ENCODE measurements at regions of chr5 and their contacts with region 1.

Region 1: GRCh38 chr5:76867827-76868693 is 18.2 kb downstream of the S100Z start:
- DNase-seq: peak; percentile 79 to 94
- H3K4me3 ChIP-seq: no peak overlapping the region
- H3K27ac ChIP-seq: peak overlapping the region; percentile 62
- H3K4me1 ChIP-seq: peaks cover 17% of the 10 kb centered on the region
- H3K27me3 ChIP-seq: no peaks in the 10 kb centered on the region
- CTCF ChIP-seq: peak; percentile 94

Region 2: GRCh38 chr5:76715736-76716455 is 152.2 kb before region 1 on chr5 and contains the start of gene F2R:
- CTCF ChIA-PET with region 1: no interaction called
- POLR2A ChIA-PET with region 1: no interaction called
- intact Hi-C with region 1: loop called (anchors 10 kb)
- DNase-seq: peak in 1 of 2 experiments; percentile 30
- H3K4me3 ChIP-seq: peak within 1 kb of the TSS; percentile 87
- H3K27ac ChIP-seq: no peak within 1 kb of the TSS
- H3K4me1 ChIP-seq: no peaks in the 10 kb centered on the region; the same call in 1 of the 2 replicates
- H3K27me3 ChIP-seq: no peaks in the 10 kb centered on the region
- CTCF ChIP-seq: peak; percentile 59; the same call in 1 of the 2 replicates
- total RNA-seq, gene F2R: 3.6 and 3.9 TPM in 2 replicates

Region 3: DNA sequence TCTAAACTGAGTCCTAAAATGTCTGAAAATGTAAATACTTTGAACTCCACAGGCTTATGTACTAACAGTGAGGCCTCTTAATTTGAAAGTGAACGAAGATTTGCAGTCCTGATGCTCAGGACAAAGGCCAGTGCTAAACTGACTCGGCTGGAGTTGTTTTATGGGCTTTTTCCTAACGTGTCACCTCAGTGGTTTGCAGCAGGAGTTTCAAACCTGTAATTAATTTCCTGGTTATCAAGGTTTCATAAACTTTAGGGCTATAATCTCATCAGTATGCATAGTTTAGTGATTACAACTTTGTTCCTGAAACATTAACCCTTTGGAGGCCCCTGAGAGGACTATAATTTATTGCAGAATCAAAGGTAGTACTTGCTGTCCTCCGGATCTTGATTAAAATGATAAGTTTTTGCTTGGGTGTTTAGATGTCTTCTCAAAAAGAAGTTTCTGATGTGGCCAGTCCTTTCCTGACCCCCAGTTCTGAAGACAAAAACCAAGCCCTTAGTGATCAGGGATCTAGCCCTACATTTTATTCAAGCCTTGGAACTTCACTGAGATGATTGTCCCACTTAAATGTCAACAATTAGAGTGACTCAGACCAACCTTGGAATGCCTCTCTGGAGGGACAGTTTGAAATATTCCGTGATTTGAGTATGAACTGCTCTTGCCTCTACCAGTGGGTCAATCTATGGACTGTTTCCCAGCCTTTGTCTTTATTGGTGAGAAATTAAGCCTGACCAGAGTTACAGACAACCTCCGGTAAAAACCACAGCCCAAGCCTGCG is 29.4 kb before region 1 on chr5:
- CTCF ChIA-PET with region 1: no interaction called
- POLR2A ChIA-PET with region 1: no interaction called
- intact Hi-C with region 1: loop called (anchors 2 kb)
- DNase-seq: peak; percentile 45 to 91
- H3K4me3 ChIP-seq: no peak overlapping the region; the same call in 1 of the 2 replicates
- H3K27ac ChIP-seq: peak overlapping the region; percentile 91
- H3K4me1 ChIP-seq: peaks cover 57% of the 10 kb centered on the region
- H3K27me3 ChIP-seq: no peaks in the 10 kb centered on the region
- CTCF ChIP-seq: no peak

Region 4: GRCh38 chr5:77143998-77144836 is 276.2 kb after region 1 on chr5:
- CTCF ChIA-PET with region 1: interaction called, 3 read pairs
- POLR2A ChIA-PET with region 1: no interaction called
- intact Hi-C with region 1: loop called (anchors 5 kb)
- DNase-seq: peak; percentile 39 to 56
- H3K4me3 ChIP-seq: no peak overlapping the region
- H3K27ac ChIP-seq: no peak overlapping the region
- H3K4me1 ChIP-seq: no peaks in the 10 kb centered on the region
- H3K27me3 ChIP-seq: no peaks in the 10 kb centered on the region
- CTCF ChIP-seq: peak; percentile 86

Region 5: GRCh38 chr5:77266291-77266690 is 398.2 kb after region 1 on chr5:
- CTCF ChIA-PET with region 1: no interaction called
- POLR2A ChIA-PET with region 1: no interaction called
- intact Hi-C with region 1: no loop called
- DNase-seq: no peak
- H3K4me3 ChIP-seq: no peak overlapping the region
- H3K27ac ChIP-seq: no peak overlapping the region
- H3K4me1 ChIP-seq: no peaks in the 10 kb centered on the region
- H3K27me3 ChIP-seq: no peaks in the 10 kb centered on the region
- CTCF ChIP-seq: no peak

Measured in PC-9 (cell line).